Lower leg skin (tissue), 4 donors: ENCODE measurements at regions of chr10 and their contacts with region 1.

Region 1: DNA sequence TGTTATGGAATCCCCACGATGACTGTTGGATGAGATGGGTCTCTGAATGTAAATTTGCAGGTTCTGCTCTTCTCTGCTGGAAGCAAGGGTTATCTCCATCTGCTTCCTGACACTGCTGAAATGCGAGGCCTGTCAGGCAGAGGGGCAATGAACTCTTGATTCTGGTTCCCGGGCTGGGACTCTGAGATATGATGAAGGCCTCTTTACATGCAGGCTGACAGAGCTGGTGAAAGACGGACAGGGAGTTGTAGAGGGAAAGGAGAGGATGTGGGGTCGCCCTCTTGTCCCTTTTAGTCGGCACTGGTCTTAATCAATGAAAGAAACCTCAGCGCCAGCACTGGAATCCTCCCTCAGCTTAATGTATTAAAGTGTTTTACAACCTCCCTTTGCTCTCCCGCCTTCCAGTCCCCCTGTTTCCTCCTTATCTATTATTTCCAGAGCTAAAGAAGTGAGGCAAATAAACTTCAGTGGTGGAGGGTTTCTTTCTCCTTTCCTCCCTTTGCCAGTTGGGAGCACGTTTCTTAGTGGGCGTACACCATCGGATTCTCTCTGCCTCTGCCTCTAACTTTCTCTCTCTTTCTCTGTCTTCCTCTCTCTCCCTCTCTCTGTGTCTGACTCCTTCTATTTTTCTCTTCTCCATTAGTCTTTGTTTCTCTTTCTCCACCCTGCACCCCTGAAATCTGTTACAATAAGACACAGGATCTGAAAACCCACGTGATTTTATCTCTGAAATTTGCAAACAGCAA is 145.6 kb downstream of the BAMBI start:
- DNase-seq: no peak
- H3K4me3 ChIP-seq: no peak overlapping the region
- CTCF ChIP-seq: no peak
- POLR2A ChIP-seq: no peak

Region 2: DNA sequence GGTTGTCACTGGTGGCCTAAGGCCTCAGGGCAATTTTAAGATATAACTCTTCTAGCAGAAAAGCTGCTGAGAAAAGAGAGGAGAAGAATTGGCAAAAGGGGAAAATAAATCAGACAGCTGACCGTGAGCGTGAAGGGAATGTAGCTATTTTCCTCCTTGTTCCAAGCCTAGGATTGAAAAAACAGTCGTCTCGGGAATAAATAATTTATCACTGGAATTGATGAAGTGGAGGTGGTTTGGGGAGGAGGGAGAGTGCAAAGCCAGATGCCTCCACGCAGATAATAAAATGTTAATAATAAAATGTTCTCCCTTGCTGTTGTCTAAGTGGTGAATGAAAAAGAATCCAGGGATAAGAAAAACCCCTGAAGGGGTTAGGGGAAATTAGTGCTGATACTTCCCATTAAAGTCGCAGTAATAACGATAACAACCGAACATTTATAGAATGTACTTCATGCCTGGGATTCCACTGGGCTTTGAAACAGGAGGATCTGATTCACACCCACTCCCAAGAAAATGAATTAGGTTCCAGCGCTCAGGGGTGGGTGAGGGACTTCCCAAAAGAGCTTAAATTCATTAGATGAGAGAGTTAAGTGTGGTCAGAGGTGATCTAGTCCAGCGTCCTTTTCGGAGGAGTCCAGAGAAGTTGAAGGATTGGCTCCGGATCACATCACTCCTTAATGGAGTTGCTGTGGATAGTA is 118.3 kb before region 1 on chr10:
- intact Hi-C with region 1: no loop called
- DNase-seq: no peak
- H3K4me3 ChIP-seq: no peak overlapping the region
- CTCF ChIP-seq: no peak
- POLR2A ChIP-seq: no peak

Region 3: GRCh38 chr10:28858646-28859045 is 35.8 kb after region 1 on chr10:
- intact Hi-C with region 1: loop called (anchors 1 kb)
- DNase-seq: no peak
- H3K4me3 ChIP-seq: no peak overlapping the region
- CTCF ChIP-seq: no peak
- POLR2A ChIP-seq: no peak